Naive thymus-derived CD4-positive, alpha-beta T cell (primary cell): ENCODE measurements at regions of chr5 and their contacts with region 1.

Region 1: GRCh38 chr5:109619606-109620005 is 70.1 kb upstream of the MAN2A1 start:
- DNase-seq: no peak
- ATAC-seq: no peak
- H3K4me3 ChIP-seq: no peak overlapping the region
- H3K4me3 Mint-ChIP-seq: no peak overlapping the region
- H3K27ac ChIP-seq: no peak overlapping the region
- H3K27ac Mint-ChIP-seq: no peak overlapping the region
- H3K4me1 ChIP-seq: no peaks in the 10 kb centered on the region
- H3K4me1 Mint-ChIP-seq: no peaks in the 10 kb centered on the region
- H3K27me3 ChIP-seq: no peaks in the 10 kb centered on the region
- H3K27me3 Mint-ChIP-seq: peaks cover 0 to 4% (median 0%) of the 10 kb centered on the region in 5 donors

Region 2: GRCh38 chr5:110179321-110179720 is 559.7 kb after region 1 on chr5:
- CTCF ChIA-PET with region 1: no interaction called
- POLR2A ChIA-PET with region 1: no interaction called
- intact Hi-C with region 1: loop called in 1 of 2 experiments (anchors 10 kb)
- DNase-seq: no peak
- ATAC-seq: no peak
- H3K4me3 ChIP-seq: no peak overlapping the region
- H3K4me3 Mint-ChIP-seq: no peak overlapping the region
- H3K27ac ChIP-seq: no peak overlapping the region
- H3K27ac Mint-ChIP-seq: no peak overlapping the region
- H3K4me1 ChIP-seq: no peaks in the 10 kb centered on the region
- H3K4me1 Mint-ChIP-seq: no peaks in the 10 kb centered on the region
- H3K27me3 ChIP-seq: no peaks in the 10 kb centered on the region
- H3K27me3 Mint-ChIP-seq: peaks cover 0 to 4% (median 0%) of the 10 kb centered on the region in 5 donors